ENCODE measurements at regions of chr17 and their contacts with region 1.

Region 1: DNA sequence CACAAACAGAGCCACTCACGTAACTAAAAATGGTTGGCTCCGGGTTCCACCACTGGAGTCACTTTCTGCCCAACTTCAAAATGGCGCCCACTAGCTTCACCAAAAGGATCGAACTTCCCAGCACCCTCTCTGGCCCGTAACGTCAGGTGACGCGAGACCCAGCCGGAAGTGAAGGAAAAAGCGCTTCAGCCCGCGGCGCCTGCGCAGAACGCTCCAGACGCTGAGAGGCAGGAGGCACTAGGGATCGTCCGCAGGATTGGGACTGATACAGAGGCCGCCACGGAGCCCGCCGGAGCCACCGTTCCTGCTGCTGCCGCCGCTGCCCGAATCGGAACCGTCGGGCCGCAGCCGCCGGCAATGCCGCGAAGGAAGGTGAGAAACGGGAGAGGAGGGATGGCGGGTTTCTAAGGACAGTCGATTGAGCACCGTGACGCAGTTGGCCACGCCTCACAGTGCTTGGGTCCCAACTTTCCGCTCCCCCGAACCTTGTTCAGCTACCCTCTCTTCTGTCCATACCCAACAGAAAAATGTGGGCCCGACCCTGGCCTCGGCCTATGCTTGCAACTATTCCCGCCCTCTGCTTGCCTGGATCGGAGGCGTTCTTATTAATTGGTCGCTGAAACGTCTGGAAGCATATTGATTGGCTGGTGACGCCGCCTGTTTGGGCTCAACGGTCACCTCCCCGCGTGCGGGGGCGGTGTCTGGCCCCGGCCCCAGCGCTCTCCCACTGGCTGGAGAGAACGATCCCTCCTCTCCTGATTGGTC is at the start of gene KAT7:
- DNase-seq: peak; percentile 99
- H3K4me3 Mint-ChIP-seq: peak within 1 kb of the TSS; percentile 91
- H3K27ac Mint-ChIP-seq: peak within 1 kb of the TSS; percentile 95
- H3K4me1 Mint-ChIP-seq: peaks cover 51% of the 10 kb centered on the region
- H3K27me3 Mint-ChIP-seq: no peaks in the 10 kb centered on the region
- total RNA-seq, gene KAT7: 60.5 to 65.8 TPM

Region 2: DNA sequence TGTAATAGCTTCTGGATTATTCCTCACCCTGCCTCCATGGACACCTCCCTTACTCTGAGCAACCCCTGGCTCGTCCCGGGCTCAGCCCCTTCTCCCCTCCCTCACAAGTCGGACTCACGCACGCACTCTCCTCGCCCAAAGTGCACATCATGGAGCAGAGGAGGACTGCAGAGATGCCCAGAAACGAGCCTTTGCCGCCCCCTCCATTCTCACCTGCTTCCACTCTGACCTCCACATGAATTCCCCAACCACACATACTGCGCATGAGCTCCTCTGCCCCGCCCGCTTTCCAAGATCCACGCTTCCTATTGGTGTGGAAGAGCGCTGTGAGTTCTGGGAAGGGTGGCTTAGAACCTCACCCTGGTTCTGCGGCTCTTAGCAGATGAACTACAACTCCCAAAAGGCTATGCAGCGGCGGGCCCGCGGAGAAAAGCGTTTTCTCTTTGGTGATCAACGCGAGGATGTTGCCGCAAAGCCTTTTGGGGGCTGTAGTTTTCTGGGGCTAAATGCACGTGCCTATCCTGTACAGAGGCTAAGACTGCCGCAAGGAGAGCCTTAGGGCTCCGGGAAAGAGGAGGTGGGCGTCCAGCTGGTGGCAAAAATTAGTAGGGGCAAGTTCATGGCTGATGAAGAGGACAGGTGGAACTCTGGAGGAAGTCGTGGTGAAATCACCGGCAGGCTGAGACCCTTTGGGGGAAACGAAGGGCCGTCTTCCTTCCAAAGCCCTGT is 373.9 kb before region 1 on chr17 and contains the start of gene PHB1:
- CTCF ChIA-PET with region 1: no interaction called
- POLR2A ChIA-PET with region 1: no interaction called
- intact Hi-C with region 1: loop called (anchors 10 kb)
- DNase-seq: peak; percentile 98
- H3K4me3 Mint-ChIP-seq: peak within 1 kb of the TSS; percentile 97
- H3K27ac Mint-ChIP-seq: peak within 1 kb of the TSS; percentile 76
- H3K4me1 Mint-ChIP-seq: peaks cover 19% of the 10 kb centered on the region
- H3K27me3 Mint-ChIP-seq: no peaks in the 10 kb centered on the region
- total RNA-seq, gene PHB1: 280 to 295 TPM

Region 3: GRCh38 chr17:49567871-49568694 is 220.6 kb before region 1 on chr17:
- CTCF ChIA-PET with region 1: interaction called, 11 read pairs
- POLR2A ChIA-PET with region 1: no interaction called
- intact Hi-C with region 1: loop called (anchors 2 kb)
- DNase-seq: peak; percentile 90
- H3K4me3 Mint-ChIP-seq: peak overlapping the region; percentile 67
- H3K27ac Mint-ChIP-seq: no peak overlapping the region
- H3K4me1 Mint-ChIP-seq: peaks cover 16% of the 10 kb centered on the region
- H3K27me3 Mint-ChIP-seq: peaks cover 14% of the 10 kb centered on the region

Region 4: GRCh38 chr17:49707608-49708514 is 80.8 kb before region 1 on chr17 and contains the start of gene SLC35B1:
- CTCF ChIA-PET with region 1: interaction called, 28 read pairs
- POLR2A ChIA-PET with region 1: interaction called, 17 read pairs
- intact Hi-C with region 1: loop called (anchors 1 kb)
- DNase-seq: peak; percentile 99
- H3K4me3 Mint-ChIP-seq: peak within 1 kb of the TSS; percentile 91
- H3K27ac Mint-ChIP-seq: peak within 1 kb of the TSS; percentile 98
- H3K4me1 Mint-ChIP-seq: peaks cover 42% of the 10 kb centered on the region
- H3K27me3 Mint-ChIP-seq: no peaks in the 10 kb centered on the region
- total RNA-seq, gene SLC35B1: 48.3 to 54.1 TPM

Region 5: DNA sequence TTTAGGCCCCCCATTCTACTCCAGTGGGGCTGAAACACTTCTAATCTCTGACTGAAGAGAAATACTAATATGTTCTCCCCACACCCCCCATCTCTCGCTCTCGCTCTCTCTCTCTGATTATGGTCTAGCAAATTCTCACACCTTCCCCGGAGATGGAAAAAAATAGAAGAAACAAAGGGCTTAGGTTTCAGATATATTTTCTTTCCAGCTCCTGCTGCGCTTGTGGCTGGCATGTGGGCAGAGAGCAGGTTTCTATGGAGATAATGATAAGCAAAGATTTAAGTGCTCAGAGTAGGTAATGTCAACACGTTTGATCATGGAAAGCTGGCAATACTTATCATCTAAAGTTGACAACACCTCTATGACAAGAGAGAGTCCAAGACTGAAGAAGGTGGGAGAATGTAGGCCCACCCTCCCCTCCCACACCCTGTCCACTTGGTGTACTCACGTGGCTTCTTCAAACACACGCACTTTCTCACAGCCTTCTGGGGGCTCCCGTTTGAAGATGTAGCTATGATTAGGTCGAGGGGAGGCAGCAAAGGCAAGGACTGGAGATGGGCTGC is 72.9 kb before region 1 on chr17:
- CTCF ChIA-PET with region 1: interaction called, 28 read pairs
- POLR2A ChIA-PET with region 1: interaction called, 10 read pairs
- intact Hi-C with region 1: loop called (anchors 1 kb)
- DNase-seq: peak; percentile 74
- H3K4me3 Mint-ChIP-seq: peak overlapping the region; percentile 27
- H3K27ac Mint-ChIP-seq: peak overlapping the region; percentile 97
- H3K4me1 Mint-ChIP-seq: peaks cover 43% of the 10 kb centered on the region
- H3K27me3 Mint-ChIP-seq: no peaks in the 10 kb centered on the region

Region 6: GRCh38 chr17:49739641-49740271 is 48.9 kb before region 1 on chr17:
- CTCF ChIA-PET with region 1: interaction called, 4 read pairs
- POLR2A ChIA-PET with region 1: interaction called, 4 read pairs
- intact Hi-C with region 1: loop called (anchors 1 kb)
- DNase-seq: peak; percentile 92
- H3K4me3 Mint-ChIP-seq: peak overlapping the region; percentile 85
- H3K27ac Mint-ChIP-seq: peak overlapping the region; percentile 100
- H3K4me1 Mint-ChIP-seq: peaks cover 74% of the 10 kb centered on the region
- H3K27me3 Mint-ChIP-seq: no peaks in the 10 kb centered on the region

Region 7: DNA sequence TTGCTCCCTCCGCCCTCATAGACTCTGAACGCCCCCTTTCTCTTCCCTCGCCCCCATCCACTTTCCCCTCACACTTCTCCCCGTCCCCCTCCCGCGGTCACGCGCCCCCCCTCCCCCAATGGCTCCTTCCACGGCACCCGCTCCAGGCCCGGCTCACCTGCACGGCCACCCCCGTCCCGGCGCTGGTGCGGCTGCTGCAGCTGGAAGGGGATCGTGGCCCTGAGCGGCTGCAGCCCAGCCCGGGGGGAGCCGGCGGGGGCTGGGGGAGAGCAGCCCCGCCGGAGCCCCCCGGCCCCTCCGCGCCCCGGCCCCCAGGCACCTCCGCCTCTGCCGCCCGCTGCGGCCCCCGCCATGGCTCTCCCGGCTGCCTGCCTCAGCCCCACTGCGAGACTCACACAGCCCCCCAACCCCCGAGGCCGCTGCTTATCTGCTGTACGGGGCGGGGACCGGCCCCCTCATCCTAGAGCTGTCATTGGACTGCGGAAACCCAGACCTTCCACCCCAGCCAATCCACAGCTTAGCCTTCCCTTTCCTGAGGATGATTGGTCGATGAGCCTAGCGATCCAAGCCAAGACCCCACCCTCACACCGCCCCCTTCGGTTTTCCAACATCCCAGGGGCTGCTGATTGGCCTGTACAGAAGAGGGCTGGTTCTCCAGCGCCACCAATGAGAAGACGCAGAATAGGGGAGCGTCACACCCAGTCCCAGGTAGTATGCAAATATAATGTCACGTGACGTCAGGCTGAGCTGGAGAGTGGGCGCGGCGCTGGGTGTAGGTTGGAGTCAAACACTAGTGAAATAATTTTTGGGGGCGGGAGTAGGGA is 24.7 kb before region 1 on chr17 and contains the start of gene FAM117A:
- CTCF ChIA-PET with region 1: no interaction called
- POLR2A ChIA-PET with region 1: interaction called, 5 read pairs
- intact Hi-C with region 1: loop called (anchors 1 kb)
- DNase-seq: peak; percentile 99
- H3K4me3 Mint-ChIP-seq: peak within 1 kb of the TSS; percentile 90
- H3K27ac Mint-ChIP-seq: peak within 1 kb of the TSS; percentile 81
- H3K4me1 Mint-ChIP-seq: peaks cover 54% of the 10 kb centered on the region
- H3K27me3 Mint-ChIP-seq: no peaks in the 10 kb centered on the region
- total RNA-seq, gene FAM117A: 20.9 to 21.6 TPM